Prostate gland (tissue), 2 donors: ENCODE measurements at regions of chr15 and their contacts with region 1.

Region 1: DNA sequence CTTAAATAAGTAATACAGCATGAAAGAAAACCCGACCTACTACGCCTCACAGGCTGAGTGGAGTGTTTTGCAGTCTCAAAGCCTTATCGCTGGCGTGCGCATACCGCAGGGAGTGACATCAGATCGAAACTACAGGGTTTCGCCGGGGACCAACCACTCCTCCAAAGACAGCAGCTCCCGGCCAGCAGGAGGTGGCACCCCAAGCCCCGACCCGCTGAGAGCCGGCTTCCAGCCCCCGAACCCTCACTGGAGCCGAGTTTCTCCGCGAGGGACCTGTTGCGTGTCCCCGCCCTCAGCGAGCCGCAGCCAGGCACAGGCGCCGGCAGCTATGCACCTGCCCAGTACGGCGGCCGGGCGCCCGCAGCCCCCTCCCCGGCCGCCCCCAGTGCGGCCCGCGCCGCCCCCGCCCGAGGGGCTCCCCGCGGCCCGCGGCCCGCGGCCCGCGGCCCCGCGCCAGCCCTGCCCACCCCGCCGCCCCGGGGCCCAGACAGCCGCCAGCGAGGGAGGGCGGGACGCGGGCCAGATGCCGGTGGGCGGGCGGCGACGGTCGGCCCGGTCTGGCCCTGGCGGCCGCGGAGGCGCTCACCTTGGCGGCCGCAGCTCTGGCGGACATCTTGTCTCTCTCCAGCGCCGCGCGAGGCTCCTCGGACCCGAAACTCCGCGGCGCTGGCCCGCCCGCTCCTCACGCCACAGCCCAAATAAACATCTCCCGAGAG is 694 bp downstream of the TJP1 start:
- DNase-seq: peak; percentile 77
- H3K4me3 ChIP-seq: peak overlapping the region; percentile 94
- H3K27ac ChIP-seq: peak overlapping the region; percentile 97
- H3K4me1 ChIP-seq: no peaks in the 10 kb centered on the region
- H3K27me3 ChIP-seq: no peaks in the 10 kb centered on the region
- CTCF ChIP-seq: peak in 2 of 4 experiments; percentile 25 to 31
- POLR2A ChIP-seq: peak; percentile 67

Region 2: GRCh38 chr15:29867241-29868109 is 45.9 kb after region 1 on chr15:
- intact Hi-C with region 1: loop called (anchors 5 kb)
- DNase-seq: no peak
- H3K4me3 ChIP-seq: no peak overlapping the region
- H3K27ac ChIP-seq: no peak overlapping the region
- H3K4me1 ChIP-seq: peaks cover 9% of the 10 kb centered on the region
- H3K27me3 ChIP-seq: no peaks in the 10 kb centered on the region
- CTCF ChIP-seq: no peak
- POLR2A ChIP-seq: no peak

Region 3: DNA sequence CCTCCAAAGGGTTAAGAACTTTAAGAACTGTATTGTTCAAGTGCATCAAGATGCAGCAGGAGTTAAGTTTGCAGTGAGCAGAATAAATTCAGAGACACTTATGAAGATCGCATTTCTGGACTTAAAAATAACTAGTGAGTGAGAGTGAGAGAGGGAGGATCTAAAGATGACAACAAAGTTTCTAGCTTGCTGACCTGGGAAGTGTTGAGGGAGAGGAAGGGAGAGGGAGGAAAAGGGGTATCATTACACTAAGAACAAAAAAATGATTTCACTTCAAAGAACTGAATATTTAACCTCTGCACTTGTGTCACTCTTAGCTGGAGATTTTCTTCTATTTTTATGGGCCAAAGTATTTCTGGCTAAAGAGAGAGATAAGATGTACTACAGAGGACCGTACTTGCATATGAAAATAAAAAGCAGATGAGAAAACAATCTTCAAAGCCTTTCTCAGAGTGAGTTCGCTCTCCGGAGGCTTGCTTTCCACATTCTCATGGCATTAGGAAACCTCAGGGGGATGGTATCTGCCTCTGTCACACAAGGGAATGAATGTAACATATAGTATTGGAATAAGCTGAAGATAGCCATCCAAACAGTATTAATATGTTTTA is 92.1 kb after region 1 on chr15:
- intact Hi-C with region 1: loop called (anchors 10 kb)
- DNase-seq: no peak
- H3K4me3 ChIP-seq: no peak overlapping the region
- H3K27ac ChIP-seq: no peak overlapping the region
- H3K4me1 ChIP-seq: peaks cover 4% of the 10 kb centered on the region
- H3K27me3 ChIP-seq: no peaks in the 10 kb centered on the region
- CTCF ChIP-seq: no peak
- POLR2A ChIP-seq: no peak

Region 4: GRCh38 chr15:30073915-30074314 is 252.3 kb after region 1 on chr15:
- intact Hi-C with region 1: loop called (anchors 10 kb)
- DNase-seq: no peak
- H3K4me3 ChIP-seq: no peak overlapping the region
- H3K27ac ChIP-seq: no peak overlapping the region
- H3K4me1 ChIP-seq: no peaks in the 10 kb centered on the region
- H3K27me3 ChIP-seq: peaks cover 2% of the 10 kb centered on the region
- CTCF ChIP-seq: no peak
- POLR2A ChIP-seq: no peak